CD14-positive monocyte (primary cell): ENCODE measurements at regions of chr17 and their contacts with region 1.

Region 1: DNA sequence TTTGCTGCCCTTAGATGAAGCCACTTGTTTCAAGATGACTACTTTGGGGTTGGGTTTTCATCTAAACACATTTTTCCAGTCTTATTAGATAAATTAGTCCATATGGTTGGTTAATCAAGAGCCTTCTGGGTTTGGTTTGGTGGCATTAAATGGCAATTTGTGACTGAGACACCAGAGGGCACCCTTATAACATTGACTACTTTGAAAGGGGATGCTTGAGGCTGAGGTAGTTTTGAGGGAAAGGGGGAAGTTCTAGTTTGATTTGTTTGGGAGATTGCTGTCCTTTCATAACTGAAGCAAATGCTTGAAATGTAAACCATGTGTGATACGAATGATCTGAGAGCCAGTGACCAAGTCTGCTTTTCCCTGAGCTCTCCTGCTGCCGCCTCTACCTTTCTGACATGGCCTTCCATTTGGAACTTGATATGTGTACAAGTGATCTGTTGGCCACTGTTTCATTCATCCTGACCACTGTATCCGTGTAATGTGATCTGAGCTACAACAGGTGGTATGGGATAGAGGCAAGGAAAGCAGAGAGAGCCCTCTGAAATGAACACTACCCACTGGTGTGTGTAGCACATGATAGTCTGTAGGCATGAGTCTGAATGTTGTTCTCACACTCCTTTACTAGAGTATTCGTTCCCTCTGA is 5.8 kb upstream of the RARA start:
- DNase-seq: peak; percentile 74 to 88 (median 81)
- H3K4me3 ChIP-seq: peak overlapping the region in 1 of 3 experiments; percentile 8
- H3K4me3 Mint-ChIP-seq: peak overlapping the region in 1 of 2 donors; percentile 41
- H3K27ac ChIP-seq: peak overlapping the region in 1 of 2 donors; percentile 20
- H3K27ac Mint-ChIP-seq: peak overlapping the region in 4 of 7 donors; percentile 46 to 76 (median 58)
- H3K4me1 ChIP-seq: peaks cover 18 to 27% of the 10 kb centered on the region in 2 donors
- H3K4me1 Mint-ChIP-seq: peaks cover 11% of the 10 kb centered on the region
- H3K27me3 ChIP-seq: no peaks in the 10 kb centered on the region
- H3K27me3 Mint-ChIP-seq: no peaks in the 10 kb centered on the region
- CTCF ChIP-seq: peak; percentile 76

Region 2: GRCh38 chr17:39952680-39953470 is 350.3 kb before region 1 on chr17:
- intact Hi-C with region 1: no loop called
- DNase-seq: peak; percentile 94 to 98 (median 96)
- H3K4me3 ChIP-seq: peak overlapping the region; percentile 43 to 79 (median 45)
- H3K4me3 Mint-ChIP-seq: peak overlapping the region; percentile 79 to 87
- H3K27ac ChIP-seq: peak overlapping the region; percentile 13 to 73
- H3K27ac Mint-ChIP-seq: peak overlapping the region in 6 of 7 donors; percentile 69 to 91 (median 86)
- H3K4me1 ChIP-seq: peaks cover 12 to 13% of the 10 kb centered on the region in 2 donors
- H3K4me1 Mint-ChIP-seq: peaks cover 20% of the 10 kb centered on the region
- H3K27me3 ChIP-seq: no peaks in the 10 kb centered on the region
- H3K27me3 Mint-ChIP-seq: peaks cover 5 to 16% (median 9%) of the 10 kb centered on the region in 3 donors
- CTCF ChIP-seq: no peak

Region 3: GRCh38 chr17:40317880-40318829 is 15.0 kb after region 1 on chr17:
- intact Hi-C with region 1: loop called in 1 of 2 experiments (anchors 2 kb)
- DNase-seq: peak; percentile 94 to 96 (median 95)
- H3K4me3 ChIP-seq: peak overlapping the region; percentile 75 to 100 (median 100)
- H3K4me3 Mint-ChIP-seq: peak overlapping the region; percentile 99
- H3K27ac ChIP-seq: peak overlapping the region; percentile 99 to 100
- H3K27ac Mint-ChIP-seq: peak overlapping the region; percentile 99 to 100 (median 100)
- H3K4me1 ChIP-seq: peaks cover 65 to 69% of the 10 kb centered on the region in 2 donors
- H3K4me1 Mint-ChIP-seq: peaks cover 55% of the 10 kb centered on the region
- H3K27me3 ChIP-seq: no peaks in the 10 kb centered on the region
- H3K27me3 Mint-ChIP-seq: peaks cover 0 to 14% (median 7%) of the 10 kb centered on the region in 3 donors
- CTCF ChIP-seq: no peak

Region 4: GRCh38 chr17:40355123-40355803 is 52.1 kb after region 1 on chr17:
- intact Hi-C with region 1: loop called (anchors 1 kb)
- DNase-seq: peak; percentile 64 to 73 (median 73)
- H3K4me3 ChIP-seq: no peak overlapping the region
- H3K4me3 Mint-ChIP-seq: no peak overlapping the region
- H3K27ac ChIP-seq: no peak overlapping the region
- H3K27ac Mint-ChIP-seq: peak overlapping the region in 4 of 7 donors; percentile 31 to 81 (median 66)
- H3K4me1 ChIP-seq: peaks cover 18 to 49% of the 10 kb centered on the region in 2 donors
- H3K4me1 Mint-ChIP-seq: peaks cover 44% of the 10 kb centered on the region
- H3K27me3 ChIP-seq: no peaks in the 10 kb centered on the region
- H3K27me3 Mint-ChIP-seq: peaks cover 3 to 5% (median 4%) of the 10 kb centered on the region in 3 donors
- CTCF ChIP-seq: peak; percentile 98

Region 5: DNA sequence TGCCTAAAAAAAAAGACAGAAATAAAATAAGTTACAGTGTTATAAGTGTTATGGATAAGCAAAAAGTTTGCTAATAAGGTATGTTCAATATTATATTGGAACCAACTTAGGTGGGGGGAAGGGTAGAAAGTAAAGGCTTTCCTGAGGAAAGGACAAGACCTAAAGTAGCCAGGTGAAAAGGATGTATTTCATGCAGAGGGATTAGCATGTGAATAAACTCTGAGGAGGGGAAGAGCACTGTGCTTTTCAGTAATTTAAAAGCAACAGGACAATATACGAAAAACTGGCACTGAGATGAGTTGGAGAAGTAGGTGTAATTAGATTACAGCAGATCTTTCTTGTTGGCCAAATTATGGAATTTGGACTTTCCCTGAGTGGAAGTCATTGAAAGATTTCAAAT is 106.9 kb after region 1 on chr17:
- intact Hi-C with region 1: loop called (anchors 5 kb)
- DNase-seq: no peak
- H3K4me3 ChIP-seq: no peak overlapping the region
- H3K4me3 Mint-ChIP-seq: no peak overlapping the region
- H3K27ac ChIP-seq: no peak overlapping the region
- H3K27ac Mint-ChIP-seq: peak overlapping the region in 2 of 7 donors; percentile 12 to 53
- H3K4me1 ChIP-seq: peaks cover under 1 to 2% of the 10 kb centered on the region in 2 donors
- H3K4me1 Mint-ChIP-seq: peaks cover 1% of the 10 kb centered on the region
- H3K27me3 ChIP-seq: no peaks in the 10 kb centered on the region
- H3K27me3 Mint-ChIP-seq: no peaks in the 10 kb centered on the region
- CTCF ChIP-seq: no peak

Region 6: GRCh38 chr17:40417609-40418427 is 114.7 kb after region 1 on chr17 and contains the start of gene TOP2A:
- intact Hi-C with region 1: loop called (anchors 5 kb)
- DNase-seq: peak; percentile 98 to 100 (median 99)
- H3K4me3 ChIP-seq: peak within 1 kb of the TSS; percentile 60 to 92 (median 82)
- H3K4me3 Mint-ChIP-seq: peak within 1 kb of the TSS; percentile 98 to 100
- H3K27ac ChIP-seq: peak within 1 kb of the TSS in 1 of 2 donors; percentile 79
- H3K27ac Mint-ChIP-seq: peak within 1 kb of the TSS; percentile 74 to 91 (median 79)
- H3K4me1 ChIP-seq: peaks cover 39 to 47% of the 10 kb centered on the region in 2 donors
- H3K4me1 Mint-ChIP-seq: peaks cover 35% of the 10 kb centered on the region
- H3K27me3 ChIP-seq: no peaks in the 10 kb centered on the region
- H3K27me3 Mint-ChIP-seq: peaks cover 0 to 2% (median 2%) of the 10 kb centered on the region in 3 donors
- CTCF ChIP-seq: no peak
- polyA plus RNA-seq, gene TOP2A: 0.01 to 0.94 (median 0.28) TPM

Region 7: GRCh38 chr17:40531051-40531991 is 228.2 kb after region 1 on chr17:
- intact Hi-C with region 1: loop called (anchors 5 to 10 kb)
- DNase-seq: no peak
- H3K4me3 ChIP-seq: no peak overlapping the region
- H3K4me3 Mint-ChIP-seq: no peak overlapping the region
- H3K27ac ChIP-seq: no peak overlapping the region
- H3K27ac Mint-ChIP-seq: no peak overlapping the region
- H3K4me1 ChIP-seq: peaks cover 0 to 8% of the 10 kb centered on the region in 2 donors
- H3K4me1 Mint-ChIP-seq: peaks cover 15% of the 10 kb centered on the region
- H3K27me3 ChIP-seq: peaks cover 3 to 4% of the 10 kb centered on the region in 2 donors
- H3K27me3 Mint-ChIP-seq: peaks cover 10 to 33% (median 24%) of the 10 kb centered on the region in 3 donors
- CTCF ChIP-seq: no peak

Region 8: DNA sequence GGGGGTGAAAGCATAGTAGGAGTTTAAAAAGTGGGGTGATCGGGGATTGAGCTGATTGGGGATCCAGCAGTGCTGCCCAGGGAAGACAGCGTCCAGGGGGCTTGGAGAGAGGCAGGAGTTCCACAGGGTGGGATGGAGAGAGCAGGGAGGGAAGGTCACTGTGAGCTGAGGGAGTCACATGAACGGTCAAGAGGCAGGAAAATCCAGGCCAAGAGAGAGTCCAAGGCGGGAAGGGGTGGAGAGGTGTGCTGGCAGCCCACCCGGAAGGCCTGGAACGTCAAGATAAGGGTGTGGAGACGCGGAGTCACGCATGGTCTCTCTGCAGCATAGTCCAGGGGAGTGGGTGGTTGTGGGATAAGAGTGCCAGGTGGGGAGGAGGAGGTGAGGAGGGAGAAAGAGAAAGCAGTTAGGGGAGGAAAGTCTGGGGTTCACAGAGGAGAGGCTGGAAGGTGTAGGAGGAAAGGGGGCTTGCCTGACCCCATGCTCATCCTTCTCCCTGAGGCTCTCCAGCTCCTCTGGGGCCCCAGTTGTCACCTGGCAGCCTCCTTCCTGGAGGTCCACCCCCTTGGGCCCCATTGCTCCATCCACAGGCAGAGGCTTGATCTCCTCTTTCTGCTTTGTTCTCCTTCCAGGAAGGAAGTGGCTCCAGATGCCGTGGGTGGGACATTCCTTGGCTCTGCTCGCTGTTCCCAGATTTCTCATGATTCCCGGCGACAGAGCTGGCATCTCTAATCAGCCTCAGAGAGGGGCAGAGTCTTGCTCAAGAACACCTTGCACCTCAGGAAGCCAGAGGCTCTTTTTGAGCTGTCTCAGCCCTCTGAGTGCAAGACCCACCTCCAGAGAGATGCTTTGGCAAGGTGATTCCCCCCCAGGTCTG is 233.4 kb after region 1 on chr17:
- intact Hi-C with region 1: loop called (anchors 5 to 10 kb)
- DNase-seq: no peak
- H3K4me3 ChIP-seq: no peak overlapping the region
- H3K4me3 Mint-ChIP-seq: no peak overlapping the region
- H3K27ac ChIP-seq: no peak overlapping the region
- H3K27ac Mint-ChIP-seq: peak overlapping the region in 1 of 7 donors; percentile 13
- H3K4me1 ChIP-seq: peaks cover 0 to 8% of the 10 kb centered on the region in 2 donors
- H3K4me1 Mint-ChIP-seq: peaks cover 15% of the 10 kb centered on the region
- H3K27me3 ChIP-seq: no peaks in the 10 kb centered on the region
- H3K27me3 Mint-ChIP-seq: peaks cover 4 to 11% (median 10%) of the 10 kb centered on the region in 3 donors
- CTCF ChIP-seq: no peak